ENCODE measurements at regions of chr1 and their contacts with region 1.

Region 1: GRCh38 chr1:109548321-109549267 is at the start of gene GNAI3:
- DNase-seq: peak; percentile 93
- ATAC-seq: peak; percentile 96
- H3K4me3 Mint-ChIP-seq: peak within 1 kb of the TSS; percentile 95
- H3K27ac Mint-ChIP-seq: peak within 1 kb of the TSS; percentile 97
- H3K4me1 Mint-ChIP-seq: peaks cover 25% of the 10 kb centered on the region
- H3K27me3 Mint-ChIP-seq: no peaks in the 10 kb centered on the region
- total RNA-seq, gene GNAI3: 8.0 to 8.2 TPM

Region 2: GRCh38 chr1:109570417-109570827 is 21.8 kb after region 1 on chr1:
- POLR2A ChIA-PET with region 1: interaction called, 11 read pairs
- DNase-seq: no peak
- ATAC-seq: no peak
- H3K4me3 Mint-ChIP-seq: no peak overlapping the region
- H3K27ac Mint-ChIP-seq: no peak overlapping the region
- H3K4me1 Mint-ChIP-seq: peaks cover 17% of the 10 kb centered on the region
- H3K27me3 Mint-ChIP-seq: no peaks in the 10 kb centered on the region

Region 3: GRCh38 chr1:109620841-109621286 is 72.3 kb after region 1 on chr1:
- POLR2A ChIA-PET with region 1: interaction called, 56 read pairs
- DNase-seq: peak; percentile 98
- ATAC-seq: peak; percentile 82
- H3K4me3 Mint-ChIP-seq: peak overlapping the region; percentile 97
- H3K27ac Mint-ChIP-seq: peak overlapping the region; percentile 98
- H3K4me1 Mint-ChIP-seq: peaks cover 61% of the 10 kb centered on the region
- H3K27me3 Mint-ChIP-seq: no peaks in the 10 kb centered on the region

Region 4: GRCh38 chr1:109640285-109640865 is 91.8 kb after region 1 on chr1:
- POLR2A ChIA-PET with region 1: interaction called, 18 read pairs
- DNase-seq: peak; percentile 93
- ATAC-seq: peak; percentile 71
- H3K4me3 Mint-ChIP-seq: no peak overlapping the region
- H3K27ac Mint-ChIP-seq: no peak overlapping the region
- H3K4me1 Mint-ChIP-seq: peaks cover 8% of the 10 kb centered on the region
- H3K27me3 Mint-ChIP-seq: peaks cover 3% of the 10 kb centered on the region

Region 5: DNA sequence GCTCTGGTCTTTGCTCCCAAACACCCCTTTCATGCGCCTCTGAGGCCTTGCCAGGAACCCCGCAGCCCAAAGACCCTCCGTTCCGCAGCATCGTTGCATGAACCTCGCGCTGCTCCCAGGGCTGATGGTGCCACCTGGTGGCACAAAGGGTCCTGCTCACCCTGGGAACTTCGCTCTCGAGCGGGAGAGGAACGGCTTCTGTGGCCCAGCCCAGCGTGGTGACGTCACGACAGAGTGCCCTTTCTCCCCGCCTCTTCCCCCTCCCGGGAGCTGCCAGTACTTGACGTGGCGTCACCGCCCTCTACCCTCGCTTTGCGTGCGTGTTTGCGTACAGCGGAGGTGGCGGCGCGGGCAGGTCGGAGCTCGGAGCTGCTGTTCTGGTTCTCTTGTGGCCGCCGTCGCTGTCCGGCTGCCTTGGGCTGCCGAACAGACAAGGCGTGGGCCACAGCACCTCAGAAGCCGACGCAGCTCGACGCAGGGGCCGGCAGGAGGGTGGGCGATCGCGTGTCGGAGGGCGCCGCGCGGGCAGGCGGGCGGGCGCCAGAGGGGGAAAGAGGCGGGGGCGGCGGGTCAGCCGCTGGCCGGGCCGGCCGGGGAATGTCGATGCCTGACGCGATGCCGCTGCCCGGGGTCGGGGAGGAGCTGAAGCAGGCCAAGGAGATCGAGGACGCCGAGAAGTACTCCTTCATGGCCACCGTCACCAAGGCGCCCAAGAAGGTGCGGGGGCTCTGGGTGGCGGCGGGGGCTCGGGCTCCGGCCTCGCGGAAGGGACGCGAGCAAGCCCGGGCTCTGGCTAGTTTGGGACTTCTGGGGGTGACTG is 436.1 kb after region 1 on chr1 and contains the start of gene AHCYL1:
- POLR2A ChIA-PET with region 1: interaction called, 18 read pairs
- DNase-seq: peak; percentile 98
- ATAC-seq: peak; percentile 98
- H3K4me3 Mint-ChIP-seq: peak within 1 kb of the TSS; percentile 98
- H3K27ac Mint-ChIP-seq: peak within 1 kb of the TSS; percentile 95
- H3K4me1 Mint-ChIP-seq: peaks cover 29% of the 10 kb centered on the region
- H3K27me3 Mint-ChIP-seq: peaks cover 2% of the 10 kb centered on the region
- total RNA-seq, gene AHCYL1: 53.6 to 55.4 TPM

Measured in activated naive CD8-positive, alpha-beta T cell treated with anti-CD3 and anti-CD28 coated beads, Interleukin-2, amount 10 ng/mL, durations not matched to agents 7 days and 5 days (primary cell).